ENCODE measurements at regions of chr9 and their contacts with region 1.

Region 1: GRCh38 chr9:111631071-111631971 is at the start of gene DNAJC25:
- DNase-seq: peak; percentile 96 to 98 (median 98)
- H3K4me3 ChIP-seq: peak within 1 kb of the TSS; percentile 69 to 86
- H3K4me3 Mint-ChIP-seq: peak within 1 kb of the TSS; percentile 94 to 99 (median 98)
- H3K27ac ChIP-seq: peak within 1 kb of the TSS; percentile 76
- H3K27ac Mint-ChIP-seq: peak within 1 kb of the TSS; percentile 88 to 97 (median 94)
- H3K4me1 ChIP-seq: peaks cover 21% of the 10 kb centered on the region
- H3K4me1 Mint-ChIP-seq: peaks cover 35 to 52% (median 43%) of the 10 kb centered on the region in 4 donors
- H3K27me3 ChIP-seq: no peaks in the 10 kb centered on the region
- H3K27me3 Mint-ChIP-seq: peaks cover 0 to 1% of the 10 kb centered on the region in 2 donors
- total RNA-seq, gene DNAJC25: 5.1 to 5.6 TPM

Region 2: DNA sequence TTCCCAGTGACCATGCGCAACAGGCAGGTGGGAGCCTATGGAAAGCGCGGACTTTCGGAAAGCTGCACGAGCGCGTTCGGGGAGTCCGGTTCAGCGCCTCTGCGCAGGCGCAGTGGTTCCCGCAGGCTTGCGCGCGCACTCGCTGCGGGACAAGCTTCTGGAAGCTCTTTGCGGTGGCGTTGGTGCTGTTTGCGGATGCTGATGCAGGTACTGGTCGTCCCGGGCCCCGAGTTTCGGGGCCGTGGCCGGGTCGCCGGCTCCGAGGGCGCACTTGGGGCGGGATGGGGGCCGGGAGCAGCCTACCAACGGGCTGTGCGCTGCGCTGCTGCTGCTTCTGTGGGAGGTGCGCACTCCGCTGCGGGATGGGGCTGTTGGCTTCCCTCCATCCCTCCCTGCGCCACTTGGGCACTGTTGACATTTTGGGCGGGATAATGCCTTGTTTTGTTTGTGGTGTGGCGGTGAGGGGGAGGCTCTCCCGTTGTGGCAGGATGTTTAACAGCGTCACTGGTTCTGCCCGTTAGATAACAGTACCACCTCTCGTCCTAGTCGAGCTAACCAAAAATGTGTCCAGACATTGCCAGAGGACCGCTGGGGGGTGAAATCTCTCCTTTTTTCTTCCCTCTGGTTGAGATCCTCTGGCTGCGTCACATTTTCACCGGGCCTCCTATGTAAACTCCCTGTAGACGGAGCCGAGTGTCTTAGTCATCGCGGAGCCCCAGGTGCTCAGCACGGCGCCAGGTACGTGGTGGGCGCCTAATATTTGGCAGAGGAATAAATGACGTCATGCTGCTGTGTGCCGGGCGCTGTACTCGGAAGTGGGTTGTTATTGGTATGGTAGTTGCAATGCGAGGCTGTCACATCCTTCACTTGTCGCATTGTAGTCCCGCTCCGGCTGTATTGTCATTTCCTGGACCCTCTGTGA is 106.0 kb before region 1 on chr9 and contains the start of gene ZNF483:
- CTCF ChIA-PET with region 1: no interaction called
- POLR2A ChIA-PET with region 1: interaction called, 10 read pairs
- intact Hi-C with region 1: no loop called
- DNase-seq: peak; percentile 71 to 95 (median 79)
- H3K4me3 ChIP-seq: peak within 1 kb of the TSS; percentile 54 to 87
- H3K4me3 Mint-ChIP-seq: peak within 1 kb of the TSS; percentile 95 to 99 (median 96)
- H3K27ac ChIP-seq: peak within 1 kb of the TSS; percentile 74
- H3K27ac Mint-ChIP-seq: peak within 1 kb of the TSS; percentile 95 to 100 (median 98)
- H3K4me1 ChIP-seq: peaks cover 9% of the 10 kb centered on the region
- H3K4me1 Mint-ChIP-seq: peaks cover 21 to 27% (median 21%) of the 10 kb centered on the region in 4 donors
- H3K27me3 ChIP-seq: no peaks in the 10 kb centered on the region
- H3K27me3 Mint-ChIP-seq: peaks cover 0 to 6% of the 10 kb centered on the region in 2 donors
- total RNA-seq, gene ZNF483: 17.6 to 22.9 TPM

Region 3: DNA sequence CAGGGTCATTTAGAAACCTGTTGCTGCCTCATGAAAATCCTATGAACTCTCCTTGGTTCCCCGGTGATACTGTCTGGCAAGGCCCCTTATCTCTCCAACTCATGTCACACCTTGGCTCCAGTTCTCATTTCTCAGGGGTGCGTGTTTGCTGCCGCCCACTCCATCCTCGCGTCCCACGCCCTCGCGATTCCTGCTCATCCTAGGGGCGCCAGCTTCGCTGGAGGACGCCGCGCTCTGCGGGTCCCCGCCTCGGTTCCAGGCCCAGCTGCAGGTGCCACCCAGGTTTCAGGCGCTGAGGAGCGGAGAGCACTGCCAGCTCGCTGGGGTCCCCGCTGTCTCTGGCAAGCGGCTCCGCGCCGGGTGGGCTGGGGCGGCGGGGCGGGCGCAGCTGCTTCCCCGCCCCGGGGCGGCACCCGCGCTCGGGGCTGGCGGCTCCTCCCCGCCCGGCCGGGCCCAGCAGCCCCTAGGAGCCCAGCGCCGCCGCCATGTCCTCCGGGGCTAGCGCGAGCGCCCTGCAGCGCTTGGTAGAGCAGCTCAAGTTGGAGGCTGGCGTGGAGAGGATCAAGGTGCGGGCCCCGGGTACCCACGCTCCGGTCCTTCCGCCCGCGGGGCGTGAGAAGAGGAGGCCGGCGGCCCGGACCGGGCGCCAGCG is 30.0 kb after region 1 on chr9 and contains the start of gene GNG10:
- CTCF ChIA-PET with region 1: interaction called, 3 read pairs
- POLR2A ChIA-PET with region 1: interaction called, 21 read pairs
- intact Hi-C with region 1: loop called (anchors 1 kb)
- DNase-seq: peak; percentile 66 to 73 (median 71)
- H3K4me3 ChIP-seq: peak within 1 kb of the TSS; percentile 76 to 77
- H3K4me3 Mint-ChIP-seq: peak within 1 kb of the TSS; percentile 91 to 97 (median 94)
- H3K27ac ChIP-seq: peak within 1 kb of the TSS; percentile 65
- H3K27ac Mint-ChIP-seq: peak within 1 kb of the TSS; percentile 68 to 98 (median 94)
- H3K4me1 ChIP-seq: peaks cover 36% of the 10 kb centered on the region
- H3K4me1 Mint-ChIP-seq: peaks cover 21 to 44% (median 31%) of the 10 kb centered on the region in 4 donors
- H3K27me3 ChIP-seq: no peaks in the 10 kb centered on the region
- H3K27me3 Mint-ChIP-seq: no peaks in the 10 kb centered on the region
- total RNA-seq, gene GNG10: 9.8 to 12.4 TPM

Region 4: GRCh38 chr9:111896353-111896958 is 265.1 kb after region 1 on chr9 and contains the start of gene UGCG:
- CTCF ChIA-PET with region 1: no interaction called
- POLR2A ChIA-PET with region 1: interaction called, 10 read pairs
- intact Hi-C with region 1: loop called (anchors 5 kb)
- DNase-seq: peak; percentile 84 to 92 (median 89)
- H3K4me3 ChIP-seq: peak within 1 kb of the TSS; percentile 87 to 97
- H3K4me3 Mint-ChIP-seq: peak within 1 kb of the TSS; percentile 90 to 96 (median 93)
- H3K27ac ChIP-seq: peak within 1 kb of the TSS; percentile 70
- H3K27ac Mint-ChIP-seq: peak within 1 kb of the TSS; percentile 91 to 97 (median 95)
- H3K4me1 ChIP-seq: peaks cover 58% of the 10 kb centered on the region
- H3K4me1 Mint-ChIP-seq: peaks cover 23 to 32% (median 31%) of the 10 kb centered on the region in 4 donors
- H3K27me3 ChIP-seq: no peaks in the 10 kb centered on the region
- H3K27me3 Mint-ChIP-seq: no peaks in the 10 kb centered on the region
- total RNA-seq, gene UGCG: 26.3 to 29.7 TPM

Region 5: DNA sequence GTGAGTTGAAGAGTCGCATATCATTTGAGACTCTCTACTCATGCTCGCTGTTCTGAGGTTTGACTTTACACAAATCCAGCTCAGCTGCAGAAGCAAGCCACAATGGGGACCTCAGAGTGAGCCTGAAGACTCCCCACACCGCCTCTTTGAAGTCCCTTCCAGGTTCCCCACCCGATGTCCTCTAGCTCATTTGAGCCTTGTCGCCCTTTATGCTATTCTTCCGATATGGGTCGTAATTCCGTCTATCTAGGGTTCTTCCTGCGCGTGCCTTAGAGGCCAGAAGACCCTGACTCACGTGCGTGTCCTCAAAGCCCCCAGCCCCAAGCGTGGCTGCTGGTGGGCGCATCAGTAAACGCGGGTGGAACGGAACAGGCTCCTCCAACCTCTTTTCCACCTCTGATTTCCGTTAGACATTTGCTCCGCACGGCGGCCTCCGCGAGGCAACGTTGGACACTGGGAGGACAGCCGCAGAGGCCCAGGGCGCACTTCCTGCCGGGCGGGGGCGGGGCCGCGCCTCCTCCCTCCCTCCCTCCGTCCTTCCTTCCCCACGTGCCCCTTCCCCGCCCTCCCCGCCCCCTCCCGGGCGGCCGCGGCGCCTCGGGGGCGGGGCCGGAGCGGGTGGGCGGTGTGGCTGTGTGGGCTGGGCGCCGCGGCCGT is 1118.9 kb after region 1 on chr9 and contains the start of gene SNX30:
- CTCF ChIA-PET with region 1: no interaction called
- POLR2A ChIA-PET with region 1: interaction called, 4 read pairs
- intact Hi-C with region 1: loop called (anchors 10 kb)
- DNase-seq: peak; percentile 76 to 84 (median 80)
- H3K4me3 ChIP-seq: peak within 1 kb of the TSS; percentile 57 to 77
- H3K4me3 Mint-ChIP-seq: peak within 1 kb of the TSS; percentile 85 to 93 (median 90)
- H3K27ac ChIP-seq: peak within 1 kb of the TSS; percentile 67
- H3K27ac Mint-ChIP-seq: peak within 1 kb of the TSS; percentile 87 to 97 (median 96)
- H3K4me1 ChIP-seq: peaks cover 62% of the 10 kb centered on the region
- H3K4me1 Mint-ChIP-seq: peaks cover 44 to 70% (median 56%) of the 10 kb centered on the region in 4 donors
- H3K27me3 ChIP-seq: no peaks in the 10 kb centered on the region
- H3K27me3 Mint-ChIP-seq: no peaks in the 10 kb centered on the region
- total RNA-seq, gene SNX30: 10.8 to 10.9 TPM

Measured in CD4-positive, alpha-beta memory T cell (primary cell).